ENCODE measurements at regions of chr5 and their contacts with region 1.

Region 1: DNA sequence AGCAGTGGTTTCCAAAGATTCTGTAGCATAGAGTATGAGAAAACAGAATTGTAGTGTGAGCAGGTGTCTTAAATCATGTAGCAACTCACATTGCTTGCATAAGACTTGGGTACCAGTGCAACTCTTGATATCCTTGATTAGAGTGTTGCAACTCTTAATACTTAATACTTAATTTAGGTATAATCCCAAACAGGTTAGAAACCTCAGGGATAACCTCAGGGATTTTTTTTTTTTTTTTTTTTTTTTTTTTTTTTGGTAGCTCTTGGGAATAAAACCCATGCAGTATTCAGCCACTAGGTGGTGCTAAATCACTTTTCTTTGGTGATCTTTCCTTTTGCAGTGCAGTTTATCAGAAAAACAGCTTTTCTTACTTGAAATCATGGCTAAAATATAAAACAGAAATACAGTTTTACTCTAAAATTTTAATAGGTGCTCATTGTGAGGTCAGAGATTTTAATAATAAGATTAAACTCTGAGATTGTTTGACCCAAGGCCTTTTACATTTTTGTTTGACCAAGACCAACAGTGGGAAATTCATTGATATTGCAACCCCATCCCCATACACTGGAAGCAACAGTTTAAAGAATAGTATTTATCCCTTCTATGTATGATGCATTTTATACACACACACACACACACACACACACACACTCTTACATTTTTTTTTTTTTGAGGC is 55.3 kb downstream of the ERAP1 start:
- DNase-seq: no peak
- H3K4me3 Mint-ChIP-seq: no peak overlapping the region
- H3K27ac Mint-ChIP-seq: no peak overlapping the region
- H3K4me1 Mint-ChIP-seq: no peaks in the 10 kb centered on the region
- H3K27me3 Mint-ChIP-seq: no peaks in the 10 kb centered on the region

Region 2: DNA sequence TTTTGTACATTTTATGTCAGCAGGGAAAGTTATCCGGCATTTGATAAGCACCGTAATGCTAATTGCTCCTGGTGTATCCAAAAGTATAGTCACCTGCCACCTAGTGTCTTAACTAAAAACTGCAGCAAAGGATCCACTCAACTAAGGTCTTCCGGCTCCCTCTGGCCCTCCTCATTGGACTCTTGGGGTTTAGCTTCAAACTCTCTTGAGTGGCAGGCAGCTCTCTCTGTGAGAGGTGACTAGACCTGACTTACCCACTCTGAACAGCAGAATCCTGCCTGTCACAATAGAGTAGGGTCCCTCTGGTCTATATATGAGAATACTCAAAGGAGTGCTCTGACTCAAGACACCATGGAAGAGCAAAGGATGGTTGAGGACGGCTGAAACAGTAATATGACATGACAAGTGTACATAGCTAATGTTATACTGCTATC is 150.7 kb before region 1 on chr5:
- CTCF ChIA-PET with region 1: no interaction called
- POLR2A ChIA-PET with region 1: no interaction called
- DNase-seq: peak; percentile 45
- H3K4me3 Mint-ChIP-seq: no peak overlapping the region
- H3K27ac Mint-ChIP-seq: no peak overlapping the region
- H3K4me1 Mint-ChIP-seq: peaks cover 1% of the 10 kb centered on the region
- H3K27me3 Mint-ChIP-seq: peaks cover 18% of the 10 kb centered on the region

Region 3: GRCh38 chr5:96763026-96763425 is 10.5 kb after region 1 on chr5:
- CTCF ChIA-PET with region 1: interaction called, 32 read pairs
- POLR2A ChIA-PET with region 1: no interaction called
- DNase-seq: no peak
- H3K4me3 Mint-ChIP-seq: no peak overlapping the region
- H3K27ac Mint-ChIP-seq: no peak overlapping the region
- H3K4me1 Mint-ChIP-seq: no peaks in the 10 kb centered on the region
- H3K27me3 Mint-ChIP-seq: no peaks in the 10 kb centered on the region